Heart left ventricle (tissue), 16 donors: ENCODE measurements at regions of chr2 and their contacts with region 1.

Region 1: GRCh38 chr2:121755236-121756111 is at the start of gene TSN:
- DNase-seq: peak; percentile 98 to 99 (median 99)
- ATAC-seq: peak; percentile 100
- H3K4me3 ChIP-seq: peak within 1 kb of the TSS; percentile 54 to 99 (median 91)
- H3K27ac ChIP-seq: peak within 1 kb of the TSS; percentile 37 to 86 (median 76)
- H3K4me1 ChIP-seq: peaks cover 0 to 30% (median 17%) of the 10 kb centered on the region in 12 donors
- H3K27me3 ChIP-seq: no peaks in the 10 kb centered on the region
- CTCF ChIP-seq: no peak
- POLR2A ChIP-seq: peak in 1 of 2 donors; percentile 75
- total RNA-seq, gene TSN: 36.8 to 58.8 (median 45.1) TPM

Region 2: DNA sequence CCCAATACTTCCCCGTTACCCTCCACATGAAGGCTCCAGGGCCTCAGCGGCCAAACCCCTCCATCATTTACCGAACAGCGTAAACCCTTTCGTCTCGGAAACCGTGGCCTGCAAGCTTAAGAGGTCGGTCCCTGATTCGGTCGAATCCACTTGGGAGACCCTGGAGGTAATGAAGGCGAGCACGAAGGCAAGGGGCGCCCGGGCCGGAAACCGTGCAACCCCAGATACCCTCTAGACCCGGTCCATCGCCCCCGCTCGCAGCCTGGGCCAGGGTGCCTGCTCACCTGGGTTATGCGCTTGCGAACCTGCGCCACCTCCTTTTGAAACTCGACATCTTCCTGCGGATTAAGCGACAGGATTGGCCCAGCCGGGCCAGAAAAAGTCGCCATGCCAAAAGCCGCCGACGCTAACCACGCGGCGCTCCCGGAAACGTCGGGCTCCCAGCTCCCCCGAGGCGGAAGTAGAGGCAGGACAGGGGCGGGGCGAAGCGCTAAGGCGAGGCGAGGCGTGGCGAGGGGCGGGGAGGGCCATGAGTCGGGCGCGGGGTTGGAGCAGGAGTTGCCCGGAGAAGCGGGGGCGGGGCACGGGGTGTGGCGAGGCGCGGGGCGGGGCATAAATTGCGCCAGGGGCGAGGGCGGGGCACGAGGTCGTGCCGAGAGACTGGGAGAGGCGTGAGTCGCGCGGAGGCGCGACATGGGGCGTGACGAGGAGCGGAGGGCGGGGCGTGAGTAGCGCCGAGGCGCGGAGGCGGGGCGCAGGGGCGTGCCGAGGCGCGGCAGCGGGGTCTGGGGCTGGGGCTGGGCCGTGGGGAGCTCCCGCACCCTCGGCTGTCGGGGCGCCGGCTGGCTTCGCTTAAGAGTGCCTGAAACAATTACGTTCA is 18.8 kb before region 1 on chr2 and contains the start of gene NIFK:
- intact Hi-C with region 1: loop called in 2 of 10 experiments (anchors 2 kb)
- DNase-seq: peak; percentile 99 to 100 (median 99)
- ATAC-seq: peak; percentile 98 to 99 (median 98)
- H3K4me3 ChIP-seq: peak within 1 kb of the TSS; percentile 40 to 98 (median 82)
- H3K27ac ChIP-seq: peak within 1 kb of the TSS; percentile 53 to 86 (median 78)
- H3K4me1 ChIP-seq: peaks cover 0 to 18% (median 9%) of the 10 kb centered on the region in 12 donors
- H3K27me3 ChIP-seq: no peaks in the 10 kb centered on the region
- CTCF ChIP-seq: peak in 2 of 12 donors; percentile 13 to 23
- POLR2A ChIP-seq: peak in 1 of 2 donors; percentile 35
- total RNA-seq, gene NIFK: 19.1 to 41.3 (median 28.8) TPM